Activated naive CD4-positive, alpha-beta T cell treated with anti-CD3 and anti-CD28 coated beads for 36 hours (primary cell): ENCODE measurements at regions of chr5 and their contacts with region 1.

Region 1: DNA sequence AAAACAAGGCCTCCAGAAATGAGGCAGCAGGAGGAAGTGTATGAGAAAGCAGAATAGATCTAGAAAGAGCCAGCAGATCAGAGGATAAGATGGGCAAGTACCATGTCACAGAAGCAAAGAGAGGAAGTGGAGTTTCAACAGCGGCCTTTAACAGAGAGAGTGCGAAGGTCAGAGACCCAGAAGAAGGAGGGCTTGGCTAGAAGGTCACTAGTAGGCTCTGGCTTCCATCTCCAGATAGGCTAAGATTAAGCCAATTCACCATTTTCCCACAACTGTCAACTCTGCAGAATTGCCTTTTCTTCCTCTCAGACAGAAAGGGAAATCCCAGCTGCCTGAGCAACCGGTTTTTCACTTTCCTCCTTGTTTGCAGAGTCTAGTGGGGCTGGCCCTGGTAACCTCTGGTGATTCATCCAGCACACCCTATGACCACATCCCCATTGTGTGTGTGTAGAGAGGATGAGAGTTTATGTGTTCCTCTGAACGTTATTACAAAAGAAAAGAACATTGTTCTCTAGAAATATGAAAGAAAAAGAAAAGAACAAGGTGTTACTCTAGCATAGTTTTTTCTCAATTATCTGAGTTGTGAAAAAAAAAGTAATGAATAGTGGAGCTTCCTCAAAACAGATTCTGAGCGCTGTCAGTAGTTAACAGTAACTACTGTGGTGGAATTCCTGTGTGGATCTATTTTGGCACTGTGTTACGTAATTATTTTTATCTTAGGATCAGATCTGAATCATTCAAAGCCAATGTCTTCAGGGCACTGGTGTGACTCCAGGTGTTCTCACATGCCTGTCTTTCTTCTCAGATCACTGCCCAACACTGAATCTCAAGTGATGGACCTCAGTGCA is 220.4 kb downstream of the ARRDC3 start:
- DNase-seq: peak; percentile 89
- H3K4me3 Mint-ChIP-seq: no peak overlapping the region
- H3K27ac Mint-ChIP-seq: peak overlapping the region; percentile 65
- H3K4me1 Mint-ChIP-seq: peaks cover 22% of the 10 kb centered on the region
- H3K27me3 Mint-ChIP-seq: no peaks in the 10 kb centered on the region

Region 2: DNA sequence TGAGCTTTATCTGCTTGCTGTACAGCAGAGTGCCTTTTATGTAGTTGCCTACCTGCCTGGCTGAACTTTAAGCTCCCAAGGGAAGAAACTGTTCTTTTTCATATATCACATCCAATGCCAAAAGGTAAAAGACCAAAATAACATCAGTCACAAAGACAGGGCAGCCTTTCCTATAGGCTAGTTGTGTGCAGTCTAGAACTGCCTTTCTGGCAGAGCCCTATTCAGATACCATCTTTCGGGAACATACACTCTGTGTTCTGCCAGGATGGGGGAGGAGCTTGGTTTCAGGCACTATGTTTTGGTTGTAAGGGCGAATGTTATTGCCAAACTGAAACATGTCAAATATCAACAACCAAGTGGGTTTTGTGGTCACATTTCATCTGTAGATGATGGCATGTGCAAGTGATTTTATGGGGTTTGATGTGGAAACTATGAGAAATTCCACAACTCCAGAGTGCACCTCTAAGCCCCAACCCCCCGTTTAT is 289.7 kb before region 1 on chr5:
- CTCF ChIA-PET with region 1: no interaction called
- intact Hi-C with region 1: loop called (anchors 2 kb)
- DNase-seq: peak; percentile 54
- H3K4me3 Mint-ChIP-seq: no peak overlapping the region
- H3K27ac Mint-ChIP-seq: no peak overlapping the region
- H3K4me1 Mint-ChIP-seq: peaks cover 22% of the 10 kb centered on the region
- H3K27me3 Mint-ChIP-seq: peaks cover 23% of the 10 kb centered on the region

Region 3: GRCh38 chr5:91059409-91059808 is 103.3 kb before region 1 on chr5:
- CTCF ChIA-PET with region 1: interaction called, 3 read pairs
- intact Hi-C with region 1: loop called (anchors 1 kb)
- DNase-seq: no peak
- H3K4me3 Mint-ChIP-seq: no peak overlapping the region
- H3K27ac Mint-ChIP-seq: no peak overlapping the region
- H3K4me1 Mint-ChIP-seq: peaks cover 28% of the 10 kb centered on the region
- H3K27me3 Mint-ChIP-seq: peaks cover 40% of the 10 kb centered on the region

Region 4: DNA sequence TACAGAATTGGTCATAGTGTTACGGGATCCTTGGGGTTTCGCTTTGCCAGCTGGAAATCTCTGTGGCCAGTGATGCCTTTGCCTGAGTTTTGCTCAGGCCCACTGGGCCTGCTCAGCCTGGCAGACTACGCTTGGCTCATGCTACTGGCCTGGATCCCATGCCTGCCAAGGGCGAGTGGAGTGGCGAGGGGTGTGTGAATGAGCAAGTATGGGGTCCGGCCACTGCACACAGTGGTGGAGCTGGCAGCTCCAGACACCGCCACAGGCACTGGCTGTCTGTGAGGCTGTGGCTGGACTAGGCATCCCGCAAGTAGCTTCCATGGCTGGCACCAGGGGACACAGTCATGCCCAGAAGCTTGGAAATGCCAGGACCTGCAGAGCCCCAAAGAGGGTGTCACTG is 19.9 kb before region 1 on chr5:
- CTCF ChIA-PET with region 1: no interaction called
- intact Hi-C with region 1: loop called (anchors 1 kb)
- DNase-seq: no peak
- H3K4me3 Mint-ChIP-seq: no peak overlapping the region
- H3K27ac Mint-ChIP-seq: no peak overlapping the region
- H3K4me1 Mint-ChIP-seq: no peaks in the 10 kb centered on the region
- H3K27me3 Mint-ChIP-seq: no peaks in the 10 kb centered on the region

Region 5: DNA sequence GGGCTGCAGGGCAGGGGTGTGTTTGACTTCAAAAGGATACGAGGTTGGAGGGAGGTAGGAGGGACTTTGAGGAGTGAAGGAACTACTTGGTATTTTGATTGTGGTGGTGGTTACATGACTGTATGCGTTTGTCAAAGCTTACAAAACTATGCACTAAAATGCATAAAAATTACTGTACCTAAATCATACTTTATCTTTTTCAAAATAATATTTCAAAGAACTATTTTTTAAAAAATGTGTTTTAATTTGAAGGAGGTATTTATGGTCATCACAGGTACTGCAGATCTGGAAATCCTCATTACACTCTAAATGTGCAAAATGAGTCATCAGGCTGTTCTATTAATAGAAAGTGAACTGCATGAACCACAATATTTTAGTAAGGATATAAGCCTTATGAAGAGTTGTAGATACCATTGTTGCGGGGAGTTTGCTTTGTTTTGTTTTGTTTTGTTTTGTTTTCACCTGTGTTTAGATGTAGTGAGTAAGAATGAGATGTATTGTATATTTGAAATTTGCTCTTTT is 103.5 kb after region 1 on chr5:
- CTCF ChIA-PET with region 1: no interaction called
- intact Hi-C with region 1: loop called (anchors 2 kb)
- DNase-seq: no peak
- H3K4me3 Mint-ChIP-seq: no peak overlapping the region
- H3K27ac Mint-ChIP-seq: no peak overlapping the region
- H3K4me1 Mint-ChIP-seq: peaks cover 22% of the 10 kb centered on the region
- H3K27me3 Mint-ChIP-seq: no peaks in the 10 kb centered on the region